MCF 10A (cell line): ENCODE measurements at regions of chr11 and their contacts with region 1.

Region 1: DNA sequence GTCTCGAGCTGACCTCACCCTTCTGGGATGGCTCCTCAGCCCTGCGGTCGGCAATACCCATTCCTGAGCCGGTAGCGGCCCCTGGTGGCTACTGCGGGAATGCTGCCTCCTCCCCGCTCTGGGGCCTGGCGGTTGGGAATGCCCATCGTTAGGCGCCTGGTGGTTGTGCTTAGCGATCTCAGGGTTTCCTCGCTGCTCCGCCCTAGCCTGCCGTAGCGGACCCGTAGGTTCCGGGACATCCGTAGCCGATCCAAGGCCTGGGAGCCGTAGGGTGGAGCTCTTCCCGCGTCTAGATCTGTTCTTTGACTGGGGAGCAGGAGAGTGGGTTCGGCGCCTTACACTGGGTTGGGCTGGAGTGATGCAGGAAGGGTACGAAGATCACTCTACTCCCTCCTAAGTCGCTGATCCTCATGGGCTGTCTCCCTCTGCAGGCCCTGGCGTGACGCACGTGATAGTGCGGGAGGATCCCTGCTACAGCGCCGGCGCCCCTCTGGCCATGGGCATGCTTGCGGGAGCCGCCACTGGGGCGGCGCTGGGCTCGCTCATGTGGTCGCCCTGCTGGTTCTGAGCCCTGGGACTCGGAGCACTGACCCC is 14.8 kb downstream of the PLEKHB1 start:
- DNase-seq: peak; percentile 87
- H3K4me3 Mint-ChIP-seq: no peak overlapping the region
- H3K27ac Mint-ChIP-seq: no peak overlapping the region
- H3K4me1 Mint-ChIP-seq: no peaks in the 10 kb centered on the region
- H3K27me3 Mint-ChIP-seq: no peaks in the 10 kb centered on the region
- CTCF ChIP-seq: peak; percentile 94

Region 2: DNA sequence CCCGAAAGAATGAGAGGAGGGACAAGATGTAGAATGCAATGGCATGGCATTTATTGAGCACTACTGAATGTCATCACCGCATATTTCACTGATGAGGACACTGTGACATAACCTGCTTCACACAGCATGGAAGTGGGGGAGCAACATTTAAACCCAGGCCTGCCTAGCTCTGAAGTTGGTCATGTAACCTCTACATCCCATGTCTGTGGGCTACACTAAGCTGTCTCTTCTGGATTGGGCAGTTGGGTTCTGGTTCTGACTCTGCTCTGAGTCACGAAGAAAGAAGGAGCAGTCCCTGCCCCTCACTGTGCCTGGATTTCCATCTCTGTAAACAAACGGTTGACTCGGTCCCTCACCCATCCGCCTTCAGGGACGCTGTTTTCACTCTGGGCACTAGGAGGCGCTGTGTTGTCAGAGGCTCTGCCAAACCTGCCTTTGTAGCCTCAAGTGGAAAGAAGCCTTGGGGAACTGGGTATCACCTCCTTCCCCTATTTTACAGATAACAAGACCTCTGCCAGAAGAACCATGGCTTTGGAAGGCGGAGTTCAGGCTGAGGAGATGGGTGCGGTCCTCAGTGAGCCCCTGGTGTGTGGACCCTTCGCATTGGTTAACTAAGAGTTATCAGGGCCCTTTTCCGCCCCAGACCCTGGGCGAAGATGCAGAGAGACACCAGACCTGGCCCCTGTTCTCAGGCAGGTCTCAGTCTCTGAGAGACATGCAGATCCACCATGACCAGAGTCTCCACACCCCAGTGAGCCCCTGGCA is 365.7 kb before region 1 on chr11:
- CTCF ChIA-PET with region 1: interaction called, 10 read pairs
- POLR2A ChIA-PET with region 1: interaction called, 4 read pairs
- intact Hi-C with region 1: no loop called
- DNase-seq: peak; percentile 80
- H3K4me3 Mint-ChIP-seq: no peak overlapping the region
- H3K27ac Mint-ChIP-seq: no peak overlapping the region
- H3K4me1 Mint-ChIP-seq: peaks cover 5% of the 10 kb centered on the region
- H3K27me3 Mint-ChIP-seq: no peaks in the 10 kb centered on the region
- CTCF ChIP-seq: peak; percentile 88

Region 3: GRCh38 chr11:73350908-73351636 is 310.1 kb before region 1 on chr11:
- CTCF ChIA-PET with region 1: interaction called, 62 read pairs
- POLR2A ChIA-PET with region 1: interaction called, 4 read pairs
- intact Hi-C with region 1: loop called (anchors 1 kb)
- DNase-seq: peak; percentile 72
- H3K4me3 Mint-ChIP-seq: no peak overlapping the region
- H3K27ac Mint-ChIP-seq: no peak overlapping the region
- H3K4me1 Mint-ChIP-seq: no peaks in the 10 kb centered on the region
- H3K27me3 Mint-ChIP-seq: no peaks in the 10 kb centered on the region
- CTCF ChIP-seq: peak; percentile 89

Region 4: DNA sequence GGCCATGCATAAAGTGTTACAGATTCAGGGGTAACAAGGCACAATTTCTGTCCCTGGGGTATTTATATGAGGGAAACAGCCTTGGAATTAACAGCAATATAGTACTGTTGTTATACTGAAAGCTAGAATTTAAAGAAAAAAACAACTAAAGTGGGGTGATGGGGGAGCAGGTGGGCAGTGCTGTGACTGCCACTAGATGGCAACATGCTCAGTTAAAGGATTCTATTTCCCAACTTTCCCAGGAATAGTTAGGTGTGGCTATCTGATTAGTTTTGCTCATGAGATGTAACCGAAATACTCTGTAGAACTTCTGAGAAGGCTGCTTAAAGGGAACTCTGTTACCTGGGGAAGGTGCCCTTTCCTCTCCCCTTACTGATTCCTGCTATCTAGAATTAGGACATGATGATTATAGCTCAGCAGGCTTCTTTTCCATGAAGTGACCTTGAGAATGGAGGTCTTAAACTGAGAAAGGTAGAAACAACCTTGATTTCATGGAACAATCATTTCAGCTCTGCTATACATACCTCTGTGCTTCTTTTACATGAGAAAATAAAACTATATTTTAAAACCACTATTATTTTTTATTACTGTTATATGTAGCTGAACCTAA is 182.3 kb before region 1 on chr11:
- CTCF ChIA-PET with region 1: interaction called, 82 read pairs
- POLR2A ChIA-PET with region 1: interaction called, 6 read pairs
- intact Hi-C with region 1: loop called (anchors 1 kb)
- DNase-seq: peak; percentile 61
- H3K4me3 Mint-ChIP-seq: no peak overlapping the region
- H3K27ac Mint-ChIP-seq: no peak overlapping the region
- H3K4me1 Mint-ChIP-seq: peaks cover 15% of the 10 kb centered on the region
- H3K27me3 Mint-ChIP-seq: no peaks in the 10 kb centered on the region
- CTCF ChIP-seq: peak; percentile 86

Region 5: DNA sequence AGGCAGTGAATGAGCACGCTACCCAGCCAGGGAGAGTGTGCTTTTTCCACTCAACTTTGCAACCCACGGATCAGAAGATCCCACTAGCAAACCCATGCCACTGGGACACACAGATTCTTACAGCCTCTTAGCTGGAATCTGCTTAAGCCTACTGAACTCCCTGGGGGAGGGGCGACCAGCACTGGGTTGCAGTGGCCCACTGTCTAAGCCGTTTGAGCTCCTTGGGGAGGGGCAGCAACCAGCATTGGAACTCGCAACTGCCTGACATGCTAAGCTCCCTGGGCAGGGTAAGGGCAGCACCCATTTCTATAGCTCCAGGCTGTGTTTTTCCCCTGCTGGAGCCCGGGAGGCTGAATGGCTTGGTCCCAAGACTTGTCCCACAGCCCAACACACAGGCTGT is 162.8 kb before region 1 on chr11:
- CTCF ChIA-PET with region 1: no interaction called
- POLR2A ChIA-PET with region 1: no interaction called
- intact Hi-C with region 1: no loop called
- DNase-seq: no peak
- H3K4me3 Mint-ChIP-seq: no peak overlapping the region
- H3K27ac Mint-ChIP-seq: no peak overlapping the region
- H3K4me1 Mint-ChIP-seq: peaks cover 6% of the 10 kb centered on the region
- H3K27me3 Mint-ChIP-seq: no peaks in the 10 kb centered on the region
- CTCF ChIP-seq: no peak

Region 6: GRCh38 chr11:73542175-73542574 is 119.0 kb before region 1 on chr11:
- CTCF ChIA-PET with region 1: no interaction called
- POLR2A ChIA-PET with region 1: no interaction called
- intact Hi-C with region 1: no loop called
- DNase-seq: peak; percentile 5
- H3K4me3 Mint-ChIP-seq: peak overlapping the region; percentile 9
- H3K27ac Mint-ChIP-seq: no peak overlapping the region
- H3K4me1 Mint-ChIP-seq: peaks cover 12% of the 10 kb centered on the region
- H3K27me3 Mint-ChIP-seq: no peaks in the 10 kb centered on the region
- CTCF ChIP-seq: no peak

Region 7: DNA sequence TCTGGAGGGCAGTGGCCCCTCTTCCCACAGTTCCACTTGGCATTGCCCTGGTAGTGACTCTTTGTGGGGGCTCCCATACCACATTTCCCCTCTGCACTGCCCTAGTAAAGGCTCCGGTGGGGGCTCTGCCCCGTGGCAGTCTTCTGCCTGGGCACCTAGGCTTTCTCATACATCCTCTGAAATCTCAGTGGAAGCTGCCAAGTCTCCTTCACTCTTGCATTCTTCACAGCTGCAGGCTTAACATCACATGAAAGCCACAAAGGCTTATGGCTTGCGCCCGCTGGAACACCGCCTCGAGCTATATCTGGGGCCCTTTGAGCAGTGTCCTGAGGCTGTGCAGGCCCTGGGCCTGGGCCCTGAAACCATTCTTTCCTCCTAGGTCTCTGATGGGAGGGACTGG is 10.6 kb after region 1 on chr11:
- CTCF ChIA-PET with region 1: interaction called, 22 read pairs
- POLR2A ChIA-PET with region 1: interaction called, 3 read pairs
- intact Hi-C with region 1: no loop called
- DNase-seq: no peak
- H3K4me3 Mint-ChIP-seq: no peak overlapping the region
- H3K27ac Mint-ChIP-seq: no peak overlapping the region
- H3K4me1 Mint-ChIP-seq: no peaks in the 10 kb centered on the region
- H3K27me3 Mint-ChIP-seq: no peaks in the 10 kb centered on the region
- CTCF ChIP-seq: no peak

Region 8: DNA sequence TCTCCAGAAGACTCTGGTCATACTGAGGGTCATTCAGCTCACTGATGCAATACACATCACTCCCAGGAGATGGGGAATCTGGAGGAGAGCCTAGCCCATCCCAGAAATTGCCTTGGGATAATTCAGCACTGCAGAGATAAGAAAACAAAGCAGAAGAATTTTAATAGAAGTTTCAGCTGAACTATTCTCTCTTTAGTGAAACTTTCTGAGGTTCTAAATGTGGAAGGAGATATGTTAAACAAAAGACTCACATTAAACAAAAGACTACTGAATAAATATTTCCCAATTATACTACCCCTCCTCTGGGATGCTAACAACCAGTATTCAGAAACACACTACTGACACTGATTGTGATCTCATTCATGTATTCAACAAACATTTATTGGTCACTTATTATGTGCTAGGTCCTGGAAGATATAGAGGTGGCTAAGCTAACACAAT is 461.9 kb after region 1 on chr11:
- CTCF ChIA-PET with region 1: no interaction called
- POLR2A ChIA-PET with region 1: no interaction called
- intact Hi-C with region 1: no loop called
- DNase-seq: no peak
- H3K4me3 Mint-ChIP-seq: no peak overlapping the region
- H3K27ac Mint-ChIP-seq: no peak overlapping the region
- H3K4me1 Mint-ChIP-seq: peaks cover 6% of the 10 kb centered on the region
- H3K27me3 Mint-ChIP-seq: no peaks in the 10 kb centered on the region
- CTCF ChIP-seq: no peak